ENCODE measurements at regions of chr2 and their contacts with region 1.

Region 1: DNA sequence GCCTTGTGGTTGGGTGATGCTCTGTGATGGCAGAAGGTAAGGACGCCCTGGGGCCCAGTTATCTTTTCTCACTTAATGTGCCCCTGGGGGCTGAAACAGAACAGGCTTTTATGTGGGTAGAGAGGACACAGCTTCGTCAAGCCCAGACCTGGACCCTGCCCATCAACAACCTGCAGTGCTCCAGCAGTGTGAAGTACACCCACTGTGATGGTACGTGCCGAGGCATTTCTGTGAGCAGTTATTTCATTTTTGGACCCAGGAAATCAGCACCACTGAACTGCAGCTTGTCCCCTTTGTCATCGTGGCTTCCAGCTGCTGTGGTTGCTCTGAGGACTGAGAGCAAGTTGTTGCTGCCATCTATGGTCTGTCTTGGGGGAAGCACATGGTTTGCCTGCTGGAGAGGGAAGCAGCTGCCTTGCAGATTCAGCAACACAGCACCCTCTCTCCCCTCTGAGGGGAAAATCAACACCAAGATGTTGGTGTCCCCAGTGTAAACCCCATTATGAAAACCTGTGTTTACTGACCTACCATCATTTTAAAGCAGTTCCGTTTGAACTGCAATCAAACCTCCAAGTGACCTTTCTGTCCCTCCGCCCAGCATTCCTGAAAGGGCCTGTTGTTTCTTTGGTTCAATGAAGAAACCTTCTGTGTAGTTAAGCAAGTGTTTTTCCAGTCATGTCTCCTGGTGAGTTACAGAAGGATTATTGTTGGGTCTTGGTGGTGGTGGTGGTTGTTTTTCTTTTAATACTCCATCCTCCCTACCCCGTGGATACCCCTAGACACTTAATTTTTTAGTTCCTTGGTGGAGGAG is 158.2 kb downstream of the MGAT5 start:
- DNase-seq: peak; percentile 66
- H3K4me3 Mint-ChIP-seq: no peak overlapping the region
- H3K27ac Mint-ChIP-seq: no peak overlapping the region
- H3K4me1 Mint-ChIP-seq: peaks cover 23% of the 10 kb centered on the region
- H3K27me3 Mint-ChIP-seq: no peaks in the 10 kb centered on the region
- CTCF ChIP-seq: peak; percentile 54

Region 2: GRCh38 chr2:133886735-133887660 is 525.0 kb before region 1 on chr2:
- CTCF ChIA-PET with region 1: interaction called, 36 read pairs
- POLR2A ChIA-PET with region 1: no interaction called
- intact Hi-C with region 1: loop called (anchors 2 kb)
- DNase-seq: peak; percentile 87
- H3K4me3 Mint-ChIP-seq: no peak overlapping the region
- H3K27ac Mint-ChIP-seq: no peak overlapping the region
- H3K4me1 Mint-ChIP-seq: peaks cover 7% of the 10 kb centered on the region
- H3K27me3 Mint-ChIP-seq: peaks cover 14% of the 10 kb centered on the region
- CTCF ChIP-seq: peak; percentile 52

Region 3: DNA sequence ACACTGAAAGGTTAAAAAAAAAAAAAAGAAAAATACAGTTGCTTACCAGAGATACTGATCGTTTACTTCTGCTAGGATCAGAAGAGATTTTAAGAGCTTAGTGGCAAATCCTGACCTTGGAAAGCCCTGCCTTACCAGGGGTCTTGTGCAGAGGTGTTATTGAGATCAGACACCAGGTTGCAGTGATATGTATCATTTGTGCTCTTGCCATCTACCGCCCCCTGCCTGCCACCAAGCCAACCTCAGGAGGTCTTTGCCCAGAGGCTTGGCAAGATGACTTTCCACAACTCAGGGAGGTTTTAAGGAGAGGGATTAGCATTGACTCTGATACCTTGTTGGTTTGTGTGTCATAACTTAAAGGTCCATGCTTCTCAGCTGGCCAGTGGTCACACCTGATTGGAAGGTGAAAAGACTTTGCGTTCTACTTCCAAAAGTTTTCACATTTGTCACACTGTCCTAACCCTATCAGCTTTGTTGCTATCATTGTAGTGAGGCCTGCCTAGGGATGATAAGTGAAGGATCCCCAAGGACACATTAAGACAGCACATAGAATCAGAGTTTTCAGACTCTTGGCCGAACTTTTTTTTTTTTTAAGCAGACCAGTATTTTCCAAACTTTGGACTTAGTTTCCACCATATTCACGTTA is 204.3 kb before region 1 on chr2:
- CTCF ChIA-PET with region 1: interaction called, 8 read pairs
- POLR2A ChIA-PET with region 1: no interaction called
- intact Hi-C with region 1: loop called (anchors 5 kb)
- DNase-seq: peak; percentile 69
- H3K4me3 Mint-ChIP-seq: no peak overlapping the region
- H3K27ac Mint-ChIP-seq: no peak overlapping the region
- H3K4me1 Mint-ChIP-seq: peaks cover 11% of the 10 kb centered on the region
- H3K27me3 Mint-ChIP-seq: no peaks in the 10 kb centered on the region
- CTCF ChIP-seq: peak; percentile 73

Region 4: DNA sequence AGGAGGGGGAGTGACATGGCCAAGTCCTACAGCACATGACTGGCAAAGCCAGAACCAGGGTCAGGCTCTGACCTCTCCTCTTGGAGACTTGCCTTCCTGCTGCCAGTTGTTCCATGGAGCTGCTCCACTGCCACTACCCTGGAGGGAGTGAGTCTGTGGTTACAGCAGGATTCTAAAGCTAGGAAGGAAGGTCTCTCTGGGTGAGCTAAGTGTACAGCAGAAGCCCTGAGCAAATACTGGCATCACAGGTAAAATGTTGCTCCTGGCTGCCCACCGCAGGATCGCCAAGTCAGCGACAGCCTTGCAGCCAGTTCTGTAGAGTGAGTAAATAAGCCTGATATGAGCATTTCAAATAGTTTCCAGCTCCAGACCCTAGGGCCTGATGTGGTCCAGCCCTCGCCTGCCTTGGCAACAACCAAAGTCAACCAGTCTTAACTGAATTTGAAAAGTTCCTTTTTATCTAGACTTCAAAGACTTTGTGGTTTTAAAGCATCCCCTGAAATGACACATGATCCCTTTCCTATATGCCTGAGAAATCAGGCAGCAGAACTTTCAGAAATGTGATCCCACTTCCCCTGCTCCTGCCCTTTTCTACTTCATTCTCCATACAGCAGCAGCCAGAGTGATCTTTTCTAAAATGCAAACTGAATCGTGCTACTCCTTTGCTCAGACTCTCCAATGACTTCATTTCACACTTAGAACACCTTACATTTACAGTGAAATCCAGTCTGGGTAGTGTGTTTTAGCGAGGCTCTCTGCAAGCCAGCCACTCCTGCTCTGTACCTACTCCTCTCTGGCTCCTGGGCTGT is 43.8 kb before region 1 on chr2:
- CTCF ChIA-PET with region 1: interaction called, 49 read pairs
- POLR2A ChIA-PET with region 1: no interaction called
- intact Hi-C with region 1: no loop called
- DNase-seq: no peak
- H3K4me3 Mint-ChIP-seq: no peak overlapping the region
- H3K27ac Mint-ChIP-seq: no peak overlapping the region
- H3K4me1 Mint-ChIP-seq: peaks cover 10% of the 10 kb centered on the region
- H3K27me3 Mint-ChIP-seq: no peaks in the 10 kb centered on the region
- CTCF ChIP-seq: no peak

Region 5: GRCh38 chr2:134375935-134376334 is 36.1 kb before region 1 on chr2:
- CTCF ChIA-PET with region 1: interaction called, 169 read pairs
- POLR2A ChIA-PET with region 1: interaction called, 4 read pairs
- intact Hi-C with region 1: loop called (anchors 1 kb)
- DNase-seq: peak; percentile 52
- H3K4me3 Mint-ChIP-seq: no peak overlapping the region
- H3K27ac Mint-ChIP-seq: no peak overlapping the region
- H3K4me1 Mint-ChIP-seq: peaks cover 34% of the 10 kb centered on the region
- H3K27me3 Mint-ChIP-seq: no peaks in the 10 kb centered on the region
- CTCF ChIP-seq: peak; percentile 22

Region 6: GRCh38 chr2:134391751-134392160 is 20.3 kb before region 1 on chr2:
- CTCF ChIA-PET with region 1: interaction called, 26 read pairs
- POLR2A ChIA-PET with region 1: interaction called, 3 read pairs
- intact Hi-C with region 1: no loop called
- DNase-seq: peak; percentile 83
- H3K4me3 Mint-ChIP-seq: peak overlapping the region; percentile 44
- H3K27ac Mint-ChIP-seq: peak overlapping the region; percentile 50
- H3K4me1 Mint-ChIP-seq: peaks cover 23% of the 10 kb centered on the region
- H3K27me3 Mint-ChIP-seq: no peaks in the 10 kb centered on the region
- CTCF ChIP-seq: no peak

Region 7: DNA sequence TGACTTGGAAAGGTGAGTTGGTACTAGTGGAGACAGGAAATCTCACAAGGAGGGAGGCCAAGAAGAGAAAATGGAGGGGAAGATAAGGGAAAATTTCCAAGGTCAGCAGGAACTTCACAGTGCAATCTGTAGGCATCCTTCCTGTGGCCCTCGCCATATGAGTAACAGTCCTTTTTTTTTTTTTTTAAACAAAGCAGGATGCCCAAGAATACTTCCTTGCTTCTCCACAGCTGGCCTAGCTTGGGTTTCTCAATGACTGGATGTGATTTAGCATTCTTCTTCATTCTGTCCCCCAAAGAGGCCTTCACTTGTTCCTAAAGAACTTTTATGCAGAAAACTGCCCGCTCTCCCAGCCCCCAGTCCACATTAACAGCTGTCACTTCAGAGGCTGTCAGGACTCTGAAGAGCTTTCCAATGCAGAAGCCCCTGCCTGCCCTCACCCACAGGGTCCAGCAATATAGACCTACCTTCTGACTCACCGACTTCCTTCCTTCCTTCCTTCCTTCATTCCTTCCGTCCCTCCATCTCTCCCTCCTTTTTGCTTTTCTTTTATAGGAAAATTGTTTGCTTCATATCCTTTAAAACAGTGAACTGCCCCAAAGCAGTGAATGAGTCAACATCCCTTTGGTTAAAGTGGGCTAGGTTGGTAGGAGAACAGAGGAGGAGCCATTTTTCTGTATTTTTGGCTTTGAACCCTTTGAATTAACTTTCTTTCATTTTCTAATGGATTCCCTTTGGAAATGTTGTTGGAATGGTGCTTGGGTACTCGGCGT is 13.9 kb after region 1 on chr2:
- CTCF ChIA-PET with region 1: interaction called, 11 read pairs
- POLR2A ChIA-PET with region 1: no interaction called
- intact Hi-C with region 1: no loop called
- DNase-seq: no peak
- H3K4me3 Mint-ChIP-seq: no peak overlapping the region
- H3K27ac Mint-ChIP-seq: no peak overlapping the region
- H3K4me1 Mint-ChIP-seq: no peaks in the 10 kb centered on the region
- H3K27me3 Mint-ChIP-seq: no peaks in the 10 kb centered on the region
- CTCF ChIP-seq: no peak

Measured in MCF 10A (cell line).